PC-3 (cell line): ENCODE measurements at regions of chr22 and their contacts with region 1.

Region 1: GRCh38 chr22:41517172-41518047 is 26.9 kb downstream of the POLR3H start:
- DNase-seq: peak; percentile 70
- ATAC-seq: peak; percentile 52
- H3K4me3 ChIP-seq: no peak overlapping the region
- H3K27ac ChIP-seq: peak overlapping the region; percentile 22
- H3K4me1 ChIP-seq: peaks cover 20% of the 10 kb centered on the region
- H3K27me3 ChIP-seq: no peaks in the 10 kb centered on the region
- CTCF ChIP-seq: peak; percentile 76

Region 2: DNA sequence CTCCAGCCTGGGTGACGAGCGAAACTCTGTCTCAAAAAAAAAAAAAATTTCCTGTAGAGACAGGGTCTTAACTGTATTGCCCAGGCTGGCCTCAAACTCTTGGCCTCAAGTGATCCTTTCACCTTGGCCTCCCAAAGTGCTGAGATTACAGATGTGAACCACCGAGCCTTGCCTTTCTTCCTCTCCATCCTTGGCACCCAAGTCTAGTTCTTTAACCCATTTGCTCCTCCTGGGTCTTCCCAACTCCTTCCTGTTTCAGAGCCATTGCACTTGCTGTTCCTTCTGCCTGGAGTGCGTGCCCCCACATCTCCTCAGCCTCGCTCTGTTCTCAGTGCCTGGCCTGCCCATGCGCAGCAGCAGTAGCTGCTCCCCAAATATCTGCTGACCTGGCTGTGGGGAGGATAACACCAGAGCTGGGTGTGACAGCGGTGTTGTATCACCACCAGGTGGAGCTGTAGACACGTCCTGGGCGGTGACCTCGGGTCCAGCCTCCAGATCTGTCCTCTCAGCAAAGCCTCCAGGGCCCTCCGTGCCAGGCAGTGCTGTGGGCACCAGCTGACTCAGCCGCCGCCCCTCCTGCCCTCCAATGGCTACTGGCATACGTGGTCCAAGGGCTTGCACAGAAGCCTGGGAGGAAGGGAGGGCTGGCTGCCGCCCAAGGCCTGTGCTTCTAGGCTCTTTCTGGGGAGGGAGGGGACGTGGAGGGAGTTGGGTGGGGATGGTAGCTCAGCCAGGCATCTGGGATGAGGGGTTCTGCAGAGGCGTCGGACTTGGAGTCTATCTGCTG is 113.7 kb before region 1 on chr22:
- CTCF ChIA-PET with region 1: interaction called, 12 read pairs
- POLR2A ChIA-PET with region 1: no interaction called
- intact Hi-C with region 1: loop called (anchors 1 kb)
- DNase-seq: peak; percentile 88
- ATAC-seq: peak; percentile 94
- H3K4me3 ChIP-seq: no peak overlapping the region
- H3K27ac ChIP-seq: no peak overlapping the region
- H3K4me1 ChIP-seq: peaks cover 15% of the 10 kb centered on the region
- H3K27me3 ChIP-seq: no peaks in the 10 kb centered on the region
- CTCF ChIP-seq: peak; percentile 86

Region 3: DNA sequence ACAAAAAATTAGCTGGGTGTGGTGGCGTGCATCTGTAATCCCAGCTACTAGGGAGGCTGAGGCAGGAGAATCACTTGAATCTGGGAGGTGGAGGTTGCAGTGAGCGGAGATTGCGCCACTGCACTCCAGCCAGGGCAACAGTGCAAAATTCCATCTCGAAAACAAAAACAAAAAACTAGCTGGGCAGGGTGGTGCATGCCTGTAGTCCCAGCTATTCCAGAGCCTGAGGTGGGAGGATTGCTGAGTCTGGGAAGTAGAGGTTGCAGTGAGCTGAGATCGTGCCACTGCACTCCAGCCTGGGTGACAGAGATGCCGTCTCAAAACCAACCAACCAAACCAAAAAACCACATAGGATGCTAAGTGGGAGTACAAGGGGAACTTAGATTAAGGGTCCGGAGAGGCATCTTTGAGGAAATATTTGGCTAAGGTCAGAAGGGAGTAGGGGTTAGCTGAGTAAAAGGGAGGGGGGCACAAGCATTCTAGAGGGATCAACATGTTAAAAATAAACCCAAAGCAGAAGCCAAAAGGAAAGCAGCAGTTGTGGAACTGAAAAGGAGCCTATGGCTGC is 59.2 kb before region 1 on chr22:
- CTCF ChIA-PET with region 1: no interaction called
- POLR2A ChIA-PET with region 1: interaction called, 13 read pairs
- intact Hi-C with region 1: no loop called
- DNase-seq: no peak
- ATAC-seq: no peak
- H3K4me3 ChIP-seq: no peak overlapping the region
- H3K27ac ChIP-seq: no peak overlapping the region
- H3K4me1 ChIP-seq: no peaks in the 10 kb centered on the region
- H3K27me3 ChIP-seq: no peaks in the 10 kb centered on the region
- CTCF ChIP-seq: no peak

Region 4: GRCh38 chr22:41543854-41544670 is 26.7 kb after region 1 on chr22 and contains the start of gene POLR3H:
- CTCF ChIA-PET with region 1: no interaction called
- POLR2A ChIA-PET with region 1: no interaction called
- intact Hi-C with region 1: no loop called
- DNase-seq: peak; percentile 96
- ATAC-seq: peak; percentile 95
- H3K4me3 ChIP-seq: peak within 1 kb of the TSS; percentile 98
- H3K27ac ChIP-seq: peak within 1 kb of the TSS; percentile 57
- H3K4me1 ChIP-seq: 0 out of 2 replicates have a peak, but pooled peaks cover 6% of the 10 kb centered on the region
- H3K27me3 ChIP-seq: no peaks in the 10 kb centered on the region
- CTCF ChIP-seq: peak; percentile 73
- total RNA-seq, gene POLR3H: 21.2 and 30.4 TPM in 2 replicates